Activated naive CD4-positive, alpha-beta T cell treated with anti-CD3 and anti-CD28 coated beads for 36 hours (primary cell): ENCODE measurements at regions of chr14 and their contacts with region 1.

Region 1: DNA sequence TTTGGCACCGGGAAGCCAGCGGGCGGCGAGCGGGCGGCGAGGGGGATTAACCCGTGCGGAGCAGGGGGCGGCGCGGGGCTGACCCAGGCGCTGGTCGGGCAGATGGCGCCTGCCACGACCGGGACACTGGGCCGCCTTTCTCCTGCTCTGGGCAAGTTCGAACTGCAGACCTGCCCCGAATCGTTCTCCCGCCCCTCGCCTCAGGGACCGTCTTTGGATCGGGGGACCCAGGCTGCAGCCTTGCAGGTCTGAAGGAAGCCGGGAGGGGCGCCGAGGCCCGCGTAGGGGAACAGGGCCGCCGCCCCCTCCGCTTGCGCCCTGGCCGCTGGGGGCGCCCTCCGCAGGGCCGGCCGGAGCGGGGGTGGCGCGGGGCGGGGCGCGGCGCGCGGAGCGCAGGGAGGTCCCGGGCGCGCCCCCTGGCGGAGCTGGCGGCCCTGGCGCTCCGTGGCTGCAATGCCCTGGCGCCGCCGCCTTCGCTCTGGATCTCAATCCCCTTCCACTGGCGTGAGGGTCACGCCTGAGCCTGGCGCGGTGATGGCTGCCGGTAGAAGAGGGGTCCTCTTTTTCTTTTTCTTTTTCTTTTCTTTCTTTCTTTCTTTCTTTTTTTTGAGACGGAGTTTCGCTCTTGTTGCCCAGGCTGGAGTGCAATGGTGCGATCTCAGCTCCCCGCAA is 449 bp upstream of the LTBP2 start:
- DNase-seq: peak; percentile 77
- H3K4me3 Mint-ChIP-seq: peak overlapping the region; percentile 62
- H3K27ac Mint-ChIP-seq: no peak overlapping the region
- H3K4me1 Mint-ChIP-seq: peaks cover 40% of the 10 kb centered on the region
- H3K27me3 Mint-ChIP-seq: peaks cover 14% of the 10 kb centered on the region

Region 2: GRCh38 chr14:74549588-74549987 is 62.9 kb before region 1 on chr14:
- CTCF ChIA-PET with region 1: interaction called, 3 read pairs
- intact Hi-C with region 1: loop called (anchors 2 kb)
- DNase-seq: peak; percentile 38
- H3K4me3 Mint-ChIP-seq: no peak overlapping the region
- H3K27ac Mint-ChIP-seq: no peak overlapping the region
- H3K4me1 Mint-ChIP-seq: no peaks in the 10 kb centered on the region
- H3K27me3 Mint-ChIP-seq: no peaks in the 10 kb centered on the region

Region 3: GRCh38 chr14:74601983-74602382 is 10.5 kb before region 1 on chr14:
- CTCF ChIA-PET with region 1: interaction called, 11 read pairs
- intact Hi-C with region 1: no loop called
- DNase-seq: no peak
- H3K4me3 Mint-ChIP-seq: no peak overlapping the region
- H3K27ac Mint-ChIP-seq: no peak overlapping the region
- H3K4me1 Mint-ChIP-seq: peaks cover 3% of the 10 kb centered on the region
- H3K27me3 Mint-ChIP-seq: no peaks in the 10 kb centered on the region

Region 4: DNA sequence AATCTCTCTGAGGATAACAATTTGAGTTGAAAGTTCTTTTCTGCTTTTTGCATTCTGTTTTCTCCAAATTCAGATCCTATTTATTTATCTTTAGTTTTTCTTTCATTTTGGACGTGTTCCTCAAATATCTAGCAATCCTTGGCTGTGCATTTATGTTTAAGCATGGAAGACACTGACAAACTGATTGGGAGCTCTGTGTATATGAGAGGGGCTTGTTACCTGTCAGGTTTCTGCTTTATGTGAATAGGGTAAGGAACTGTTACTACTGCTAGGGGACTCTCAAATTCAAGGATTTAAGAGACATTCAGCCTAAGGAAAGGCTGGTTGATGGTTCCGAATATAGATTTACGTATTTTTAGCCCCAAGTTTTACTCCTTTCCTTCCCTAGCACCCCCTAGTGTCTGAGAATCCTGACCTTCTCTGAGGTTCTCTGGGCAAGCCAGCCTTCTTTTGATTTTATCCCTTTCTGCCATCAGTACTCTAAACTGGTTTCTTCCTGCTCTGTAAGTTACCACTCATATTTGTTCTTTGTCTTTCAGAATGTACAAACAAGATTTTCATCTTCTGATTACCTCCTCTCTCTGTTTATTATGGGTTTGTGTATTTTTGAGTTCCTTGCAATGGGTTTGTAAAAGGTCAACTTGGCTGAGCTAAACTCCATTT is 181.2 kb after region 1 on chr14:
- CTCF ChIA-PET with region 1: interaction called, 4 read pairs
- intact Hi-C with region 1: loop called (anchors 1 kb)
- DNase-seq: peak; percentile 31
- H3K4me3 Mint-ChIP-seq: peak overlapping the region; percentile 60
- H3K27ac Mint-ChIP-seq: peak overlapping the region; percentile 81
- H3K4me1 Mint-ChIP-seq: peaks cover 40% of the 10 kb centered on the region
- H3K27me3 Mint-ChIP-seq: no peaks in the 10 kb centered on the region

Region 5: GRCh38 chr14:74824997-74825396 is 212.5 kb after region 1 on chr14:
- CTCF ChIA-PET with region 1: no interaction called
- intact Hi-C with region 1: no loop called
- DNase-seq: no peak
- H3K4me3 Mint-ChIP-seq: no peak overlapping the region
- H3K27ac Mint-ChIP-seq: no peak overlapping the region
- H3K4me1 Mint-ChIP-seq: peaks cover 5% of the 10 kb centered on the region
- H3K27me3 Mint-ChIP-seq: no peaks in the 10 kb centered on the region

Region 6: DNA sequence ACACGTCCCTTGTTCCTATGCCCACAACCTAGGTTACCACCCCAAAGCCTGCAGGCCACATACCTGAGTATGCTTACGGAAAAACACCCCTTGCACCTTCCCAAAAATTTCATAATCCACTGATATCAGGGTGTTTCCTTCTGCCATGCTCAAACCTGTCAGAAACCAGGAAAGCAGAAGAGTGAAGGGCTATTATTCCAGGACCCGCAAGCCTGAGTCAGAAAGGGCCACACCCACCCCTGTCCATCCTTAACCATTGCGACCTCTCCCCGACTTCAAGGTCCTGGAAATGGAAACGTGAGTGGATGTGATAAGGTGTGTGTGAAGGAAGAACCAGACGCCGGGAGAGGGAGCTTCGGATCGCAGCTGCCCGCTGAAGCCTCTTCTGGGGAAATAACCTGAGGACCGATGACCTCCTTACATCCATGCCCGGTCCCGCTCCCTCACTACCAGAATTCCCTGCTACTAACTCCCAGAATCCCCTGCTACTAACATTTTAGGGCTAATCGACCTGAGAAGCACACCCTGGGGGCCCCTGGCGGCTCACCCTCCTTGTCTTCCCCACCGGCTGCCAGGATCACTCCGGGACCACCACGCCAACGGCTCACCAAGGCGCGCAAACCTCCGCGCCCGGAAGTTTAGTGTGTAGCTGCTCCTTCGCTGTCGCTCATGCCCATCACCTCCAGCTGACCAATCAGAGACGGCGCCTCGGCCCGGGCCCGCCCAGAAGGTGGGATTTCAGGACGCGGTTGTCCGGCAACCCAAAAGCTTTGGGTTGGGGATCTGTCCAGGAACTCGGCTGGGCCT is 451.1 kb after region 1 on chr14 and contains the start of gene ACYP1:
- CTCF ChIA-PET with region 1: no interaction called
- intact Hi-C with region 1: no loop called
- DNase-seq: peak; percentile 96
- H3K4me3 Mint-ChIP-seq: peak within 1 kb of the TSS; percentile 99
- H3K27ac Mint-ChIP-seq: peak within 1 kb of the TSS; percentile 94
- H3K4me1 Mint-ChIP-seq: peaks cover 23% of the 10 kb centered on the region
- H3K27me3 Mint-ChIP-seq: no peaks in the 10 kb centered on the region
- total RNA-seq, gene ACYP1: 46.3 to 50.5 TPM

Region 7: DNA sequence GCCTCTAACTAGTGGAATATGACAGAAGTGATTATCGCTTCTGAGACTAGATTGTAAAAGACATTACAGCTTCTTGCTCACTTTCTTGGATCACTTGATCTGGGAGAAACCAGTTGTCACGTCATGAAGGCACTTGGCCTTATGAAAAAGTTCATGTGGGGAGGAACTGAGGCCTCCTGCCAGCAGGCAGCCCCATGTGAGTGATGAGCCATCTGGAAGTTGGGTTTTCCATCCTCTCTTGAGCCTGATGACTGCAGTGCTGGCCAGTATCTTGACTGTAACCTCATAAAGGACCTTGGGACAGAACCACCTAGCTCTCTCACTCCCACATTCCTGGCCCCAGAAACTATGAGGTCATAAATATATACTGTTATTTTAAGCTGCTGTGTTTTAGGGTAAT is 1076.5 kb after region 1 on chr14:
- CTCF ChIA-PET with region 1: no interaction called
- intact Hi-C with region 1: no loop called
- DNase-seq: no peak
- H3K4me3 Mint-ChIP-seq: no peak overlapping the region
- H3K27ac Mint-ChIP-seq: no peak overlapping the region
- H3K4me1 Mint-ChIP-seq: peaks cover 6% of the 10 kb centered on the region
- H3K27me3 Mint-ChIP-seq: no peaks in the 10 kb centered on the region